BJ (cell line): ENCODE measurements at regions of chr9 and their contacts with region 1.

Region 1: GRCh38 chr9:111866976-111867375 is 29.6 kb upstream of the UGCG start:
- DNase-seq: no peak
- H3K4me3 ChIP-seq: no peak overlapping the region
- H3K27me3 ChIP-seq: no peaks in the 10 kb centered on the region
- CTCF ChIP-seq: no peak

Region 2: DNA sequence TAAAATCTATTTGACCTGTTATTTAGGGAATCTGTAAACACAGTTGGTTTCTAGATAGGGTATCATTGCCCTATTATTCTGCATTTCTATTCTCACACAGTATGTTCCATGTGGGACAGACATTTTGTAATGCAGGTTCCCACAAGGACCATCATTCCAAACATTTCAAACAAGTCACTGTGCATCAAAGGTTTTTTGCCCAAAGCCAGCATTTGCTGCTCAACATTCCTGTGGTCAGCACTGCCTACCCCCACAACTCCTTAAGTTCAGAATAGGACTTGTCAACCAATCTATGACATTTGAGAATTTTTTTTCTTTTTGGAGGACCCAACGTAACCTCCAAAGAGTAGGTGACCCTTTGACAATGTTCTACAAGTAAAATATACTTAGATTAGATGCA is 924.5 kb before region 1 on chr9:
- CTCF ChIA-PET with region 1: no interaction called
- POLR2A ChIA-PET with region 1: no interaction called
- DNase-seq: no peak
- H3K4me3 ChIP-seq: no peak overlapping the region
- H3K27me3 ChIP-seq: no peaks in the 10 kb centered on the region
- CTCF ChIP-seq: no peak

Region 3: DNA sequence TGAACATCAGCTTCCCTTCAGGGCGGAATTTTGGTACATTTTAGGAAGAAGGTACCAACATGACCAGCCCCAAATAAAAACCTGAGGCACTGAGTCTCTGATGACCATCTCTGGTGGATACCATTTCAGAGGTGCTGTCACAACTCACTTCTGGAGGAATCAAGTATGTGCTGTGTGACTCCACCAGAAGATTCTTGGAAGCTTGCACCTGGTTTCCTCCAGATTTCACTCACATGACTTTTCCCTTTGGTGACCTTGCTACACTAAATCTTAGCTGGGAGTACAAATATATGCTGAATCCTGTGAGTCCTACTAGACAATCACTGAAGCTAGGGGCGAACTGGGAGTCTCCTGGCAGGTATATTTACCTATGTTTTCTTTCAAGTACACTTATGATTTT is 411.3 kb before region 1 on chr9:
- CTCF ChIA-PET with region 1: no interaction called
- POLR2A ChIA-PET with region 1: interaction called, 17 read pairs
- DNase-seq: no peak
- H3K4me3 ChIP-seq: no peak overlapping the region
- H3K27me3 ChIP-seq: no peaks in the 10 kb centered on the region
- CTCF ChIP-seq: no peak